Naive thymus-derived CD4-positive, alpha-beta T cell (primary cell): ENCODE measurements at regions of chr3 and their contacts with region 1.

Region 1: DNA sequence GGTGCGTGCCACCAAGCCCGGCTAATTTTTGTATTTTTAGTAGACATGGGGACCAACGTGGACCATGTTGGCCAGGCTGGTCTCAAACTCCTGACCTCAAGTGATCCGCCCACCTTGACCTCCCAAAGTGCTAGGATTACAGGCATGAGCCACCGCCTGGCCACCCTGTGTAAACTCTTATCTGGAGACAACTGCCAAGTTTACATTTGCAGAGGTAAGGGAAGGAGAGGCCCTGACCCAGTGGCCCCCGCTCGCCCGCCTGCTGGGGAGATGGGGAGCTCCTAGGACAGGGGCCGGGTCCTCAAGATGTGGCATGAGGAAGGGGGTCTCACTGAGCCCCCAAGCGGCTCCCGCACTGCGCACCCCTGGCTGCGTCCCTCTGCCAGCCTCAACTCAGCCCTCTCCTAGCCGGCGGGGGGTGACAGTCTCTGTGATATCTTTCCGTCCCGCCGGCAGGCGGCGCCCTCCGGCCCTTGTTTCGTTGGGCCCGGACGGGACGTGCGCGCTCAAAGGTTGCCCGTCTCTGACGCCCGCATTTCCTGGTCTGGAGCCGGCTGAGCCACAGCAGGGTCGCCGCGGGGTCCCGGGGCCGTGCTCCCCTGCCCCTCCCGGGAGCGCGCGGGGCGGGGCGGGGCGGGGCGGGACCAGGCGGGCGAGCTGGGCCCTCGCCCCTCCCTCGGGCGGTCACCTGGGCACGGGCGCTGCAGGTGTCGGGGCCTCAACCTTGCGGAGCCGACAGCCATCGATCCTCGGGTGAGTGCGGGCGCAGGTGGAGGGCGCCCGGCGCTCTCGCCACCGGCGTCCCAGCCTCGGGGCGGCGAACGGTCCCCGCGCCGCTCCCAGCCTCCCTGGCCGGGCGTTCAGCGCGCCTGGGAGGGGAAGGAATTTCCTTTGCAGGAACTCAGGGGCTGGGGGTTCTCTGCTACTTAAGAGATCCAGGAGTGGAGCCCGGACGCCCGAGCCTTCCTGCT is at the start of gene GPR160:
- DNase-seq: peak; percentile 67 to 85 (median 80)
- ATAC-seq: peak; percentile 82
- H3K4me3 ChIP-seq: peak within 1 kb of the TSS; percentile 88
- H3K4me3 Mint-ChIP-seq: peak within 1 kb of the TSS; percentile 86 to 93 (median 90)
- H3K27ac ChIP-seq: peak within 1 kb of the TSS; percentile 63
- H3K27ac Mint-ChIP-seq: peak within 1 kb of the TSS; percentile 33 to 92 (median 82)
- H3K4me1 ChIP-seq: peaks cover 15 to 16% of the 10 kb centered on the region in 2 donors
- H3K4me1 Mint-ChIP-seq: peaks cover 24 to 66% (median 49%) of the 10 kb centered on the region in 7 donors
- H3K27me3 ChIP-seq: no peaks in the 10 kb centered on the region
- H3K27me3 Mint-ChIP-seq: peaks cover 0 to 6% (median 0%) of the 10 kb centered on the region in 5 donors
- total RNA-seq, gene GPR160: 6.1 to 44.3 (median 8.7) TPM

Region 2: GRCh38 chr3:169764452-169765274 is 273.1 kb before region 1 on chr3 and contains the start of gene TERC:
- CTCF ChIA-PET with region 1: interaction called, 5 read pairs
- POLR2A ChIA-PET with region 1: interaction called, 11 read pairs
- intact Hi-C with region 1: loop called (anchors 1 to 2 kb)
- DNase-seq: peak; percentile 72 to 96 (median 94)
- ATAC-seq: peak; percentile 91
- H3K4me3 ChIP-seq: peak within 1 kb of the TSS; percentile 88
- H3K4me3 Mint-ChIP-seq: peak within 1 kb of the TSS; percentile 89 to 99 (median 98)
- H3K27ac ChIP-seq: peak within 1 kb of the TSS; percentile 98
- H3K27ac Mint-ChIP-seq: peak within 1 kb of the TSS; percentile 96 to 100 (median 99)
- H3K4me1 ChIP-seq: peaks cover 11 to 18% of the 10 kb centered on the region in 2 donors
- H3K4me1 Mint-ChIP-seq: peaks cover 6 to 39% (median 33%) of the 10 kb centered on the region in 7 donors
- H3K27me3 ChIP-seq: no peaks in the 10 kb centered on the region
- H3K27me3 Mint-ChIP-seq: no peaks in the 10 kb centered on the region
- total RNA-seq, gene TERC: 4.0 to 19.4 (median 7.4) TPM

Region 3: DNA sequence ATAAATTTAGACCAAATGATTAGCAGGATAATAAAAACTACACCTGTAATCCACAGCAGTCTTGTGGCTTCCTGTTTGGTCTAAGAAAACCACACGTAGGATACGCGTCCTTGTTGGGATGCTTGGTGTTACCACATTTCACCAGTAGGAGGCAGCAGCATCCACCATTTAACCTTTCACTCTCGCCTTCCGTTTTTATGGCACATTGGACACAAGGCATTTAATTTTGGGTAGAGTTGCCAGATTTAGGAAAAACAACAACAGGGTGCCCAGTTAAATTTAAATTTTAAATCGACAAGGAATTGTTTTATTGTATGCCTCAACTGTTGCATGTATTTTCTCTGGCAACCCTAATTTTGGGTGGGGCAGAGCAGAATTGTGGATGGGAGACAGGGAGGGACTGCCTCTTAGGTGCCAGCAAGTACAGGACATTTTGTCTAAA is 174.3 kb before region 1 on chr3:
- CTCF ChIA-PET with region 1: interaction called, 4 read pairs
- POLR2A ChIA-PET with region 1: interaction called, 12 read pairs
- intact Hi-C with region 1: loop called (anchors 1 to 5 kb)
- DNase-seq: peak; percentile 29 to 77 (median 67)
- ATAC-seq: peak; percentile 87
- H3K4me3 ChIP-seq: no peak overlapping the region
- H3K4me3 Mint-ChIP-seq: peak overlapping the region in 4 of 10 donors; percentile 3 to 58 (median 38)
- H3K27ac ChIP-seq: no peak overlapping the region
- H3K27ac Mint-ChIP-seq: peak overlapping the region in 6 of 9 donors; percentile 42 to 98 (median 52)
- H3K4me1 ChIP-seq: peaks cover 6 to 22% of the 10 kb centered on the region in 2 donors
- H3K4me1 Mint-ChIP-seq: peaks cover 19 to 38% (median 27%) of the 10 kb centered on the region in 7 donors
- H3K27me3 ChIP-seq: no peaks in the 10 kb centered on the region
- H3K27me3 Mint-ChIP-seq: peaks cover 0 to 14% (median 0%) of the 10 kb centered on the region in 5 donors

Region 4: DNA sequence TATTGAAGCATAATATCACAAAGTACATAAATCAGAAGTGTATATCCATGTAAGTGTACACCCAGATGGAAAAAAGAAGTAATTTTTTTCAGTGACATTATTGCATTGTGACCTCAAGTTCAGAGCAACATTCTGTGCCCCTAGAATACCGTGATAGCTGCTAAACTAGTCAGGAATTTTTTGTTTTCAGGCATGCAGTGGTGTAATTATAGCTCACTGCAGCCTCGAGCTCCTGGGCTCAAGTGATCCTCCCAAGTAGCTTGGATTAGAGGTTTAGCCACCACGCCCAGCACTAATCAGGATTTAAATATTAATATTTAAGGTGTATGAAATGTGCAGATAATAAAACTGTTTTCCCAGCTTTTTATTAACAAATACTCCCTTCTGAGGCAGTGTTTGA is 45.6 kb before region 1 on chr3:
- CTCF ChIA-PET with region 1: interaction called, 6 read pairs
- POLR2A ChIA-PET with region 1: interaction called, 3 read pairs
- intact Hi-C with region 1: loop called in 1 of 2 experiments (anchors 1 kb)
- DNase-seq: no peak
- ATAC-seq: no peak
- H3K4me3 ChIP-seq: no peak overlapping the region
- H3K4me3 Mint-ChIP-seq: no peak overlapping the region
- H3K27ac ChIP-seq: no peak overlapping the region
- H3K27ac Mint-ChIP-seq: peak overlapping the region in 2 of 9 donors; percentile 13 to 61
- H3K4me1 ChIP-seq: no peaks in the 10 kb centered on the region
- H3K4me1 Mint-ChIP-seq: peaks cover 0 to 13% (median 2%) of the 10 kb centered on the region in 7 donors
- H3K27me3 ChIP-seq: no peaks in the 10 kb centered on the region
- H3K27me3 Mint-ChIP-seq: no peaks in the 10 kb centered on the region

Region 5: GRCh38 chr3:170027233-170028102 is 10.3 kb before region 1 on chr3:
- CTCF ChIA-PET with region 1: interaction called, 6 read pairs
- POLR2A ChIA-PET with region 1: interaction called, 37 read pairs
- intact Hi-C with region 1: loop called in 1 of 2 experiments (anchors 1 kb)
- DNase-seq: peak in 7 of 9 donors; percentile 17 to 64 (median 50)
- ATAC-seq: no peak
- H3K4me3 ChIP-seq: no peak overlapping the region
- H3K4me3 Mint-ChIP-seq: peak overlapping the region; percentile 1 to 75 (median 64)
- H3K27ac ChIP-seq: no peak overlapping the region
- H3K27ac Mint-ChIP-seq: peak overlapping the region; percentile 47 to 95 (median 89)
- H3K4me1 ChIP-seq: peaks cover 4 to 19% of the 10 kb centered on the region in 2 donors
- H3K4me1 Mint-ChIP-seq: peaks cover 15 to 69% (median 45%) of the 10 kb centered on the region in 7 donors
- H3K27me3 ChIP-seq: no peaks in the 10 kb centered on the region
- H3K27me3 Mint-ChIP-seq: peaks cover 0 to 5% (median 0%) of the 10 kb centered on the region in 5 donors

Region 6: DNA sequence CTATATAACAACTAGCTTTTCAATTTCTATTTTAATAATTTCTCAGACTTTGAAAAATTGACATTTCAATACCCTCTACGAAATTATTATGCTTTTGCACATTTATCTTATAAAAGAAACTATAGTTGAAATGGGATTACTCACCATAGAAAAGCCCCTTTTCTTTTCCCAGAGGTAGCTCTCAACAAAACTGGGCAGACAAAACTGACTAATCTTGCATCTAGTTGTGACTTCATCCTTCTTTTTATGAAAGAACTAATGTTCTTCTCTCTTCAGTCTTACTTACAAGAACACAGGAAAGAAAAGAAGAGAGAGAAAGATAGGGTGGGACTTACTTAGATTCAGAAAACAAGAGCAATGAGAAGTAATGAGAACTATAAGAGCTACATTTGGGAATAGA is 61.0 kb after region 1 on chr3:
- CTCF ChIA-PET with region 1: interaction called, 3 read pairs
- POLR2A ChIA-PET with region 1: no interaction called
- intact Hi-C with region 1: loop called in 1 of 2 experiments (anchors 1 kb)
- DNase-seq: no peak
- ATAC-seq: no peak
- H3K4me3 ChIP-seq: no peak overlapping the region
- H3K4me3 Mint-ChIP-seq: no peak overlapping the region
- H3K27ac ChIP-seq: no peak overlapping the region
- H3K27ac Mint-ChIP-seq: peak overlapping the region in 6 of 9 donors; percentile 34 to 67 (median 54)
- H3K4me1 ChIP-seq: no peaks in the 10 kb centered on the region
- H3K4me1 Mint-ChIP-seq: peaks cover 2 to 34% (median 18%) of the 10 kb centered on the region in 7 donors
- H3K27me3 ChIP-seq: no peaks in the 10 kb centered on the region
- H3K27me3 Mint-ChIP-seq: no peaks in the 10 kb centered on the region

Region 7: DNA sequence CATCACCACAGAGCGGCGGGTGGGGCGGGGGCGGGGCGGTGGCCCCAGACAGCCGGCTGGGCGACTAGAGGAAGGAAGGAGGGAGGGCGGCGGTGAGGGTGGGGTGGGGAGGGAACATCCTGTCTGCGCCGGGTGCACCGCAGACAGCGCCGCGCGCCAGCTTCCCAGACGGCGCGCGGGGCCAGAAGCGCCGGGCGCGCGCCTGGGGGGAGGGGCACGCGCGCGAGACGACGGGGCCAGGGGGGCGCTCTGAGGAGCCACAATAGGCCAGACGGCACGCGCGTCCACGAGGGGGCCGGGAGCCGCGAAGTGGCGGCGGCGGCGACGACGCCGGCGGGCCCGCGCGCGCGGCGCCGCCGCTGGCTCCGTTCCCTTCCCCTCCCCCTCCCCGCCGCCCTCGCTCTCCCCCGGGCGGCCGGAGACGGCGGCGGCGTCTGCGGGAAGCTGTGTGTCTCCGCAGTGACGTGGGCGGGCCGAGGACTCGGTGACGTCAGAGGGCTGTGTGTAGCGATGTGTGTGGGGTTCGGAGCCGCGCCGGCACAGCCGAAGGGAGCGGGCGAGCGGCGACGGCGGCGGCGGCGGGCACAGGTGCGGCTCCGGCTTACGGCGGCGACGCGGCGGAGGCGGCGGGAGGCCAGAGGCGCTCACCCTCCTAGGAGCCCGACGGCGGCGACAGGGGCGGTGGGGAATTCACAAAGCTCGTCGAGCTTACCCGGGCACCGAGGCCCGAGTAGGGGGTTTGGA is 319.6 kb after region 1 on chr3 and contains the start of gene SKIL:
- CTCF ChIA-PET with region 1: no interaction called
- POLR2A ChIA-PET with region 1: no interaction called
- intact Hi-C with region 1: loop called (anchors 1 to 5 kb)
- DNase-seq: peak; percentile 93 to 98 (median 96)
- ATAC-seq: peak; percentile 84
- H3K4me3 ChIP-seq: peak within 1 kb of the TSS; percentile 63
- H3K4me3 Mint-ChIP-seq: peak within 1 kb of the TSS; percentile 80 to 96 (median 94)
- H3K27ac ChIP-seq: peak within 1 kb of the TSS; percentile 99
- H3K27ac Mint-ChIP-seq: peak within 1 kb of the TSS; percentile 91 to 99 (median 97)
- H3K4me1 ChIP-seq: peaks cover 7 to 13% of the 10 kb centered on the region in 2 donors
- H3K4me1 Mint-ChIP-seq: peaks cover 28 to 68% (median 60%) of the 10 kb centered on the region in 7 donors
- H3K27me3 ChIP-seq: no peaks in the 10 kb centered on the region
- H3K27me3 Mint-ChIP-seq: peaks cover 0 to 26% (median 0%) of the 10 kb centered on the region in 5 donors
- total RNA-seq, gene SKIL: 19.1 to 80.5 (median 40.9) TPM